Motor neuron (in vitro differentiated cells): ENCODE measurements at regions of chr12 and their contacts with region 1.

Region 1: DNA sequence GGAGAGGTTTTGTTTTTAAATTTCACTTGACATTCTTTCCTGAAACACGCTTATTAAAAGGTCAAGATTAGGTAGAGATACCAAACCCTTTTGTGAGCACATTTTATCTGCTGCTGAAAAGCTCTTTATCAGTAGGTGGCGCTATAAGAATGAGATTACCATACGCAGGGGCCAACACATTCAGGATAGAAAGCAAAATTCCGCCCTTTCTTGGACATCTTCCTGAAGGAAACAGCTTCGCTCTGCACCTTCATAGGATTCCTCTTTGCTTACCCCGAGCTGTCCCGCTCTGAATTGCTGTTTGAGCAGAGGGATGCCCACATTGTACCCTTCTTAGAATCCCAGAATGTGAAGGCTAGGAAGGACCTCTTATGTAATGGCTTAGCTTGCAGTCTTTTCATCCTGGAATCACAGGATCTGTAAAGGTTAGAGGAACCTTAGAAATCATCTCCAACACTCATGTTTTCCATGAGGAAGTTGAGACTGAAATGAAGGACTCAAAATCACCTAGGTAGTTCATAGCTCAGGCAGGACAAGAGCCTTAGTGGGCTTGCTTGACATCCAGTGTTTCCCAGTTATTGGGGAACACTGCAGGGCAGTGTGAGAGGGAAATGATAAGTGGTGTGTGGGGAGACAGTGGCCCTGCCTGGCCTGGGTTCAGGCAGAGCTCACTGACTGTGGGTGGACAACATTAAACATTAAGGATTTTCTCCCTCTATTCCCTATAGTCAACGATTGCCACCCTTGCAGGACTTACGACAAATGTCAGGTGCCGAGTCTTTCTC is 38.7 kb upstream of the CRY1 start:
- ATAC-seq: peak; percentile 67 to 84 (median 76)
- H3K4me3 ChIP-seq: no peak overlapping the region
- H3K27ac ChIP-seq: no peak overlapping the region
- H3K4me1 ChIP-seq: peaks cover 13 to 40% of the 10 kb centered on the region in 2 donors

Region 2: GRCh38 chr12:107317751-107318613 is 186.0 kb after region 1 on chr12:
- in situ Hi-C with region 1: loop called in 1 of 9 experiments (anchors 25 kb)
- ATAC-seq: peak; percentile 88 to 98 (median 91)
- H3K4me3 ChIP-seq: peak overlapping the region; percentile 32 to 47 (median 41)
- H3K27ac ChIP-seq: no peak overlapping the region
- H3K4me1 ChIP-seq: peaks cover 11% of the 10 kb centered on the region in 2 donors

Region 3: DNA sequence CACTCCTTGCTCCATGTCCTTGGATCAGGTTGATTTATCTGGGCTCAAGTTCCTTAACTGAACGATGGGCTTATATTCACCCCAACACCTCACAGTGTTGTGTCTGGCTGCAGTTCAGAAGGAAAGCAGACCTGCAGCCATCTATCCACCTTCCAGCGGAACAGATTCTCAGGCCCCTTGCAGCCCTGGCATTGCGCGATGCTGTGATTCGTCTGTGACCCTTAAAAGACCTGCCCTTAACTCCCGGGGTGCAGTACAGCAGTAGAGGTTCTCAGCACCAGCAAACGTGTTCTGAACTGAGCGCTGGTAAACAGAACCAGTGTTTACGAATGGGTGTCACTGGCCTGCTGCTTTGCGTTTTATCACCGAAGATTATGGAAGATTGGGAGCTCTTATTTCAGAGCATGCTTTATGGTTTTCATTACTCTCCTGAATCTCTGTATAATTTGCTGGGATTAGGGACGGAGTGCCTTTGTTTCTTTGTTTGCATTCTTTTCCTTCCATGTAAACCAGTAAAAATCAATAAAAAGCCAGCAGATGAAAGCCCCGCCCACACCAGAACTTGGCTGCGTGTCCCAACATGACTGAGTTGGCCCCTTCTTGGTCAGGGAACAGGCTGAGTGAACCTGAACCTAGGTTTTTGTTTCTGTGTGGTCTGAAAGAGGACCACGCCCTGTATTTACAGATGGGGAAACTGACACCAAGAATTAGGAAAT is 248.0 kb after region 1 on chr12:
- in situ Hi-C with region 1: loop called in 1 of 9 experiments (anchors 25 kb)
- ATAC-seq: peak in 4 of 8 experiments; percentile 30 to 79 (median 52)
- H3K4me3 ChIP-seq: no peak overlapping the region
- H3K27ac ChIP-seq: no peak overlapping the region
- H3K4me1 ChIP-seq: peaks cover 0 to 7% of the 10 kb centered on the region in 2 donors

Region 4: GRCh38 chr12:107607464-107608392 is 475.7 kb after region 1 on chr12:
- in situ Hi-C with region 1: loop called (anchors 10 to 25 kb)
- ATAC-seq: peak; percentile 79 to 96 (median 85)
- H3K4me3 ChIP-seq: no peak overlapping the region
- H3K27ac ChIP-seq: no peak overlapping the region
- H3K4me1 ChIP-seq: peaks cover 12 to 18% of the 10 kb centered on the region in 2 donors

Region 5: GRCh38 chr12:107884769-107885694 is 753.0 kb after region 1 on chr12:
- in situ Hi-C with region 1: loop called in 1 of 9 experiments (anchors 25 kb)
- ATAC-seq: peak; percentile 67 to 90 (median 78)
- H3K4me3 ChIP-seq: no peak overlapping the region
- H3K27ac ChIP-seq: no peak overlapping the region
- H3K4me1 ChIP-seq: no peaks in the 10 kb centered on the region